CD4-positive, alpha-beta T cell (primary cell): ENCODE measurements at regions of chr12 and their contacts with region 1.

Region 1: GRCh38 chr12:98593351-98594049 is at the start of gene SLC25A3:
- DNase-seq: peak; percentile 91 to 99 (median 94)
- ATAC-seq: peak; percentile 94
- H3K4me3 ChIP-seq: peak within 1 kb of the TSS; percentile 97
- H3K4me3 Mint-ChIP-seq: peak within 1 kb of the TSS; percentile 95
- H3K27ac ChIP-seq: peak within 1 kb of the TSS; percentile 90 to 98
- H3K27ac Mint-ChIP-seq: peak within 1 kb of the TSS; percentile 93
- H3K4me1 ChIP-seq: peaks cover 22% of the 10 kb centered on the region
- H3K4me1 Mint-ChIP-seq: peaks cover 38% of the 10 kb centered on the region
- H3K27me3 ChIP-seq: no peaks in the 10 kb centered on the region
- H3K27me3 Mint-ChIP-seq: no peaks in the 10 kb centered on the region
- CTCF ChIP-seq: no peak
- total RNA-seq, gene SLC25A3: 602 to 615 TPM

Region 2: DNA sequence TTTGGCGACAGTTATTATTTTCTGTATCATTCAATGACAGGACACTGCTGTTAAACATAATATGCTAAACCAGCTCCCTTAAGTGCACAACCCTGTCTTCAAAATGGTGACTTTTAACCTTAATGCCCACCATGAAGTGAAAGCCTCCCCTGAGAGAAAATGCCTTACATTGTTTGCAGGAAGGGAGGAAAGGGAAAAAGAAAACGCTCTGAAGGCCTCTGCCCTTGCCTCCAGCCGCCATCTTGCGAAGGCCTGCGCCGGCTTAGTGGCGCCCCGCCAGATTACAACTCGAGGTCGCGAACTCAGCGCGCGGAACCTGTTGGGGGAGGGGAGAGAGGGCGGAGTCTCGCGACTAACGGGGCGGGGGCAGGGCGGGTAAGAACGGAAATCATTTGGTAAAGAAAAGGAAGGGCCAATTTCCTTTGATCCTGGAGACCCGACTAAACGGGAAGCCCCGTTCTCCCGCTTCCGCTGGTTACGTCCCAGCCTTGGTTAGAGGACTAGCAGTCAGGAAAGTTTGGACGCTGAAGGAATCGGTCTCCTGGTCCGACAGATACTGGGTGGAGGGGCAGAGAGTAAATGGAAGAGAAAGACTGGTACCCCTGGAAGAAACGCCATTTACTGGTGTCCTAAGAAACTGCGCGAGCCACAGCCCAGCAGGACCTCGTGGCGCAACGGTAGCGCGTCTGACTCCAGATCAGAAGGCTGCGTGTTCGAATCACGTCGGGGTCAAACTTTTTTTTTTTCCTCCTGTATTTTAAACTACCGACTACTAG is 89.7 kb before region 1 on chr12:
- CTCF ChIA-PET with region 1: no interaction called
- POLR2A ChIA-PET with region 1: interaction called, 4 read pairs
- intact Hi-C with region 1: loop called in 1 of 2 experiments (anchors 5 kb)
- DNase-seq: peak; percentile 90 to 97 (median 94)
- ATAC-seq: peak; percentile 85
- H3K4me3 ChIP-seq: peak overlapping the region; percentile 95
- H3K4me3 Mint-ChIP-seq: peak overlapping the region; percentile 99
- H3K27ac ChIP-seq: peak overlapping the region; percentile 88 to 97
- H3K27ac Mint-ChIP-seq: peak overlapping the region; percentile 100
- H3K4me1 ChIP-seq: peaks cover 28% of the 10 kb centered on the region
- H3K4me1 Mint-ChIP-seq: peaks cover 34% of the 10 kb centered on the region
- H3K27me3 ChIP-seq: no peaks in the 10 kb centered on the region
- H3K27me3 Mint-ChIP-seq: peaks cover 18% of the 10 kb centered on the region
- CTCF ChIP-seq: no peak

Region 3: GRCh38 chr12:98572010-98572409 is 21.5 kb before region 1 on chr12:
- CTCF ChIA-PET with region 1: interaction called, 16 read pairs
- POLR2A ChIA-PET with region 1: interaction called, 18 read pairs
- intact Hi-C with region 1: no loop called
- DNase-seq: no peak
- ATAC-seq: no peak
- H3K4me3 ChIP-seq: no peak overlapping the region
- H3K4me3 Mint-ChIP-seq: no peak overlapping the region
- H3K27ac ChIP-seq: no peak overlapping the region
- H3K27ac Mint-ChIP-seq: no peak overlapping the region
- H3K4me1 ChIP-seq: peaks cover 2% of the 10 kb centered on the region
- H3K4me1 Mint-ChIP-seq: peaks cover 1% of the 10 kb centered on the region
- H3K27me3 ChIP-seq: no peaks in the 10 kb centered on the region
- H3K27me3 Mint-ChIP-seq: no peaks in the 10 kb centered on the region
- CTCF ChIP-seq: no peak

Region 4: DNA sequence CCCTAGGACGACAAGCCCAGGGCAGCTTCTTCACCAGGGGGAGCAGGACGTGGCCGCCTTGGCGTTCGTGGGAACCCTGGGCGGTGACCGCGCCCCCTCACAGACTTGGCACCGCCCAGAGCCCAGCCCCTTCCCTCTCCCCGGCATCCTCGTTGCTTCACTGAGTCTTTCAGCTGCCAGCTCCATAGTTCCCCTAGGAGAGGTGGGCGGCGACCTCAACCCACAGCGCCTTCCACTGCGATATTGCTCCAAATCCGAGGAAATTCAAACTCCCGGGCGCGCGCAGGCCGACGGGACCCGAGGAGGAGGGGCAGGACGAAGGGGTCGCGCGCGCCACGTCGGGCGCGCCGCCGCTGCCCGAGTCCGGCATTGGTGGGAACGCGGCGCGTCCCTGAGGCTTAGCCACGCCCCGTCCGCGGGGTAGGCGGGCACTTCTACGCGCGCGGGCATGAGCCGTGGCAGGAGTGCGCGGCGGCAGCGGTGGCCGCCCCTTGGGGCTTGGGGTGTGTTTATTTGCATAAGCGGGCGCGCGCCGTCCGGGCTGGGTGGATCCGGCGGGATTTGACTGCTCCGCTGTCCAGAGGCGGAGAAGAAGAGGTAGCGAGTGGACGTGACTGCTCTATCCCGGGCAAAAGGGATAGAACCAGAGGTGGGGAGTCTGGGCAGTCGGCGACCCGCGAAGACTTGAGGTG is 51.4 kb after region 1 on chr12 and contains the starts of genes APAF1 and IKBIP:
- CTCF ChIA-PET with region 1: interaction called, 5 read pairs
- POLR2A ChIA-PET with region 1: interaction called, 70 read pairs
- intact Hi-C with region 1: loop called (anchors 1 kb)
- DNase-seq: peak; percentile 91 to 98 (median 97)
- ATAC-seq: peak; percentile 91
- H3K4me3 ChIP-seq: peak within 1 kb of the TSS; percentile 89
- H3K4me3 Mint-ChIP-seq: peak within 1 kb of the TSS; percentile 99
- H3K27ac ChIP-seq: peak within 1 kb of the TSS; percentile 55 to 71
- H3K27ac Mint-ChIP-seq: peak within 1 kb of the TSS; percentile 91
- H3K4me1 ChIP-seq: peaks cover 22% of the 10 kb centered on the region
- H3K4me1 Mint-ChIP-seq: peaks cover 32% of the 10 kb centered on the region
- H3K27me3 ChIP-seq: no peaks in the 10 kb centered on the region
- H3K27me3 Mint-ChIP-seq: no peaks in the 10 kb centered on the region
- CTCF ChIP-seq: no peak
- total RNA-seq, gene APAF1: 13.5 to 14.5 TPM
- total RNA-seq, gene IKBIP: 0.56 to 0.82 TPM

Region 5: GRCh38 chr12:98709022-98709421 is 115.5 kb after region 1 on chr12:
- CTCF ChIA-PET with region 1: no interaction called
- POLR2A ChIA-PET with region 1: no interaction called
- intact Hi-C with region 1: no loop called
- DNase-seq: no peak
- ATAC-seq: no peak
- H3K4me3 ChIP-seq: no peak overlapping the region
- H3K4me3 Mint-ChIP-seq: no peak overlapping the region
- H3K27ac ChIP-seq: no peak overlapping the region
- H3K27ac Mint-ChIP-seq: no peak overlapping the region
- H3K4me1 ChIP-seq: no peaks in the 10 kb centered on the region
- H3K4me1 Mint-ChIP-seq: no peaks in the 10 kb centered on the region
- H3K27me3 ChIP-seq: no peaks in the 10 kb centered on the region
- H3K27me3 Mint-ChIP-seq: no peaks in the 10 kb centered on the region
- CTCF ChIP-seq: no peak